ENCODE measurements at regions of chr12 and their contacts with region 1.

Region 1: GRCh38 chr12:61974461-61974860 is 285.7 kb upstream of the USP15 start:
- DNase-seq: no peak
- ATAC-seq: no peak
- H3K4me3 ChIP-seq: no peak overlapping the region
- H3K4me3 Mint-ChIP-seq: no peak overlapping the region
- H3K27ac ChIP-seq: no peak overlapping the region
- H3K27ac Mint-ChIP-seq: no peak overlapping the region
- H3K4me1 ChIP-seq: no peaks in the 10 kb centered on the region
- H3K4me1 Mint-ChIP-seq: no peaks in the 10 kb centered on the region
- H3K27me3 ChIP-seq: no peaks in the 10 kb centered on the region
- H3K27me3 Mint-ChIP-seq: no peaks in the 10 kb centered on the region
- CTCF ChIP-seq: no peak

Region 2: DNA sequence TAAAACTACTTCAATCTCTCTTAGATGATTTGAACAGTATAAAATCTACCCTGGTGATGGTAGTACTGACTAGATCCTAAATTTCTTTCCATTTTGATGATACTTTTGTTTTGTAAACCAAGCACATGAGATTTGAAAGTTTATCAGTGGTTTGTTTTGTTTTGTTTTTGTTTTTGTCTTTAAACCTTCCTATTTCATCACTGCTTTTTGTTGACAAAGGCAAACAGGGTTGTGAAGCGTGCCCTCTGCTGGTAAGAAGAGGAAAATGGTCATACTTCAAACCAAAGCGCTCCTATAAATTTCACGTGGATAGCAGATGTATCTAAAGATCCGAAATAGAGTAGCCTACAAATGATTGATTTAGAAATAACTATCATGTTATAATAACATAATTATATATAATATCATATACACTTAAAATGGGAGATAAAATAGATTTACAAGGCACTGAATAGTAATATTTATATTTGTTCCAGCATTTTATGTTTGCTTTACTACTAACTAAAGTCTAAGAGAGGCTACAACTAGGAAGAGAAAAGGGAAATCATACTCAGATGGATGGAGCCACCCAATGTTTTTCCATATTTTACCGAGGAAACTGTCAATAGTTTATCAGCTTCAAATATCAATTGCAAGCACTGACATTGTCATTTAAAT is 31.7 kb after region 1 on chr12:
- CTCF ChIA-PET with region 1: no interaction called
- POLR2A ChIA-PET with region 1: no interaction called
- intact Hi-C with region 1: loop called in 1 of 2 experiments (anchors 2 kb)
- DNase-seq: peak in 3 of 9 experiments; percentile 18 to 37 (median 25)
- ATAC-seq: no peak
- H3K4me3 ChIP-seq: no peak overlapping the region
- H3K4me3 Mint-ChIP-seq: no peak overlapping the region
- H3K27ac ChIP-seq: no peak overlapping the region
- H3K27ac Mint-ChIP-seq: no peak overlapping the region
- H3K4me1 ChIP-seq: no peaks in the 10 kb centered on the region
- H3K4me1 Mint-ChIP-seq: no peaks in the 10 kb centered on the region
- H3K27me3 ChIP-seq: no peaks in the 10 kb centered on the region
- H3K27me3 Mint-ChIP-seq: peaks cover 2% of the 10 kb centered on the region
- CTCF ChIP-seq: peak; percentile 69

Region 3: GRCh38 chr12:62232143-62232729 is 257.8 kb after region 1 on chr12:
- CTCF ChIA-PET with region 1: no interaction called
- POLR2A ChIA-PET with region 1: no interaction called
- intact Hi-C with region 1: no loop called
- DNase-seq: no peak
- ATAC-seq: no peak
- H3K4me3 ChIP-seq: no peak overlapping the region
- H3K4me3 Mint-ChIP-seq: no peak overlapping the region
- H3K27ac ChIP-seq: no peak overlapping the region
- H3K27ac Mint-ChIP-seq: no peak overlapping the region
- H3K4me1 ChIP-seq: no peaks in the 10 kb centered on the region
- H3K4me1 Mint-ChIP-seq: no peaks in the 10 kb centered on the region
- H3K27me3 ChIP-seq: no peaks in the 10 kb centered on the region
- H3K27me3 Mint-ChIP-seq: no peaks in the 10 kb centered on the region
- CTCF ChIP-seq: no peak